Endothelial cell of umbilical vein (primary cell): ENCODE measurements at regions of chr18 and their contacts with region 1.

Region 1: GRCh38 chr18:31679133-31679731 is 5.1 kb downstream of the B4GALT6 start:
- DNase-seq: peak; percentile 93
- H3K4me3 ChIP-seq: peak overlapping the region in 1 of 3 experiments; percentile 4
- H3K27ac ChIP-seq: peak overlapping the region; percentile 84
- H3K4me1 ChIP-seq: peaks cover 61% of the 10 kb centered on the region
- H3K27me3 ChIP-seq: no peaks in the 10 kb centered on the region
- CTCF ChIP-seq: no peak
- POLR2A ChIP-seq: peak; percentile 67

Region 2: DNA sequence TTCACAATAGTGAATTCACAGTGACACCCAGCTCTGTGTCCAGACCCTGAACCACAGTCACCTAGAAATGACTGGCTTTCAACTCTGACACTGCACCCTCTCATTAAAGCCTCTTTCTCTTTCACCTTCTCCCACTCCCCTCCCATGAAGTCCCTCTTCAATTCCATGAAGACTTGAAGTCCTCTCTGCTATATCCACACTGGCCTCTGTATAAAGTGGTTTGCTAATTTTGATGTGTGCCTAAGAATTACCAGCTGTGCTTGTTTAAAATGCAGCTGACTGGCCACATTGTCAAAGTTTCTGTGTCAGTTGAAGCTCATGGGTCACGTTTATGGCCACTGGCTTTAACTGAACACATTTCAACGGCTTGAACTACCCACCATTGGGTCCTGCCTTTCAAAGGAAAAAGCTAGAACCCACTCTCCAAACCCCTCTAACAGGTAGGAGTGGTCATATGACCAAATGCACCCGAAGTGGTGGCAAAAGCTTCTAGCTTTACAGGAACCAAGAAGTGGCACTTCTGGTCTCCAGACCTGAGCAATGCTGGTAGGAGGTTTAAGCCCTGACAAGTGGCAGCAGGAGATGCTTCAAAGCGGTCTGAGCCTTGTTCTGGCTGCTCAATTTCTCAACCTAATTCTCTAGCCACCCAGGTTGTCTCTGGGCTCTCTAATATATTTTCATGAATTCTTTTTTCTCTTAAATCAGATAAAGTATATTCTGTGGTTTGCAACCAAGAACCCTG is 29.1 kb before region 1 on chr18:
- CTCF ChIA-PET with region 1: interaction called, 4 read pairs
- POLR2A ChIA-PET with region 1: no interaction called
- dilution Hi-C with region 1: no loop called
- intact Hi-C with region 1: loop called (anchors 2 kb)
- DNase-seq: no peak
- H3K4me3 ChIP-seq: no peak overlapping the region
- H3K27ac ChIP-seq: no peak overlapping the region
- H3K4me1 ChIP-seq: peaks cover 11% of the 10 kb centered on the region
- H3K27me3 ChIP-seq: no peaks in the 10 kb centered on the region
- CTCF ChIP-seq: no peak
- POLR2A ChIP-seq: no peak

Region 3: GRCh38 chr18:31667185-31667584 is 12.0 kb before region 1 on chr18:
- CTCF ChIA-PET with region 1: interaction called, 7 read pairs
- POLR2A ChIA-PET with region 1: no interaction called
- dilution Hi-C with region 1: no loop called
- intact Hi-C with region 1: loop called (anchors 1 kb)
- DNase-seq: no peak
- H3K4me3 ChIP-seq: no peak overlapping the region
- H3K27ac ChIP-seq: no peak overlapping the region
- H3K4me1 ChIP-seq: no peaks in the 10 kb centered on the region
- H3K27me3 ChIP-seq: no peaks in the 10 kb centered on the region
- CTCF ChIP-seq: no peak
- POLR2A ChIP-seq: no peak